ENCODE measurements at regions of chr2 and their contacts with region 1.

Region 1: GRCh38 chr2:219680958-219681693 is 53.7 kb downstream of the SLC4A3 start:
- DNase-seq: no peak
- ATAC-seq: no peak
- H3K4me3 ChIP-seq: no peak overlapping the region
- H3K27ac ChIP-seq: no peak overlapping the region
- H3K4me1 ChIP-seq: peaks cover 8% of the 10 kb centered on the region; the same call in 1 of the 2 replicates
- H3K27me3 ChIP-seq: no peaks in the 10 kb centered on the region
- CTCF ChIP-seq: no peak

Region 2: DNA sequence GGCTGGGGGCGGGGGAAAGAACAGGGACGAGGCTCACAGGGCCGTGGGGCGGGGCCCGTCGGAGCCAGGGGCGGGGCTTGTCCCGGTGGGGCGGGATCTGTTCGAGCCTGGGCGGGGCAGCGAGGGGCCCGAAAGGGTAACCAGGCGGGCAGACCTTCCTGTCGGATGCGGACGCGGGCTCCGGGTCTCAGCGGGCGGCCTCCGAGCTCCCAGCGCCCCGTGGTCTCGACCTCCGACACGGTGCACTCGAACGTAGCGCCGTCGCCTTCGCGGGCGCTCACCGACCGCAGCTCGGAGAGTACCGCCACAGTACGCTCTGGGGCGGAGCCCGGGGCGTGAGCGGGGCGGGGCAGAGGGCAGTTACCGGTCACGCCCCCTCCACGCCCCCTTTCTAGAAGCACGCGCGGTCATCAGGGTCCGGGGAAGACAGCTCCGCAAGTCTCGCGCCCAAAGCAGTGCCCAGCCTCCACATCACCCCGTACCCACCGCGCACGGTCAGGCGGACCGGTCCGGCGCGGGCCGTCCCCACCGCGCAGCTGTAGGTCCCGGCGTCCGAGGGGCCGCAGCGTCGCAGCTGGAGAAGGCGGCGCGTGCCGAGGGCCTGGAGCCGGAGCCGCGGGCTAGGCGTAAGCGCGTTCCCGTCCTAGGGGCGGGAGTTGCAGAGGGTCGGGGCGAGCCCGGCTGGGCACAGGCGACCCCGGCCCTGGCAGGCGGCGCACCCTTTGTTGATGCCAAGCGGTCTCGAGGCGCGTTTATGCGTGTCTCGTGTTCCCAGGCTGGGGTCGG is 128.6 kb before region 1 on chr2:
- CTCF ChIA-PET with region 1: interaction called, 14 read pairs
- POLR2A ChIA-PET with region 1: no interaction called
- in situ Hi-C with region 1: no loop called
- intact Hi-C with region 1: no loop called
- DNase-seq: no peak
- ATAC-seq: peak; percentile 92
- H3K4me3 ChIP-seq: peak overlapping the region; percentile 51 to 64
- H3K27ac ChIP-seq: no peak overlapping the region
- H3K4me1 ChIP-seq: peaks cover 3% of the 10 kb centered on the region; the same call in 1 of the 2 replicates
- H3K27me3 ChIP-seq: no peaks in the 10 kb centered on the region
- CTCF ChIP-seq: no peak